Right ventricle myocardium inferior (tissue), 1 donor: ENCODE measurements at regions of chr9 and their contacts with region 1.

Region 1: DNA sequence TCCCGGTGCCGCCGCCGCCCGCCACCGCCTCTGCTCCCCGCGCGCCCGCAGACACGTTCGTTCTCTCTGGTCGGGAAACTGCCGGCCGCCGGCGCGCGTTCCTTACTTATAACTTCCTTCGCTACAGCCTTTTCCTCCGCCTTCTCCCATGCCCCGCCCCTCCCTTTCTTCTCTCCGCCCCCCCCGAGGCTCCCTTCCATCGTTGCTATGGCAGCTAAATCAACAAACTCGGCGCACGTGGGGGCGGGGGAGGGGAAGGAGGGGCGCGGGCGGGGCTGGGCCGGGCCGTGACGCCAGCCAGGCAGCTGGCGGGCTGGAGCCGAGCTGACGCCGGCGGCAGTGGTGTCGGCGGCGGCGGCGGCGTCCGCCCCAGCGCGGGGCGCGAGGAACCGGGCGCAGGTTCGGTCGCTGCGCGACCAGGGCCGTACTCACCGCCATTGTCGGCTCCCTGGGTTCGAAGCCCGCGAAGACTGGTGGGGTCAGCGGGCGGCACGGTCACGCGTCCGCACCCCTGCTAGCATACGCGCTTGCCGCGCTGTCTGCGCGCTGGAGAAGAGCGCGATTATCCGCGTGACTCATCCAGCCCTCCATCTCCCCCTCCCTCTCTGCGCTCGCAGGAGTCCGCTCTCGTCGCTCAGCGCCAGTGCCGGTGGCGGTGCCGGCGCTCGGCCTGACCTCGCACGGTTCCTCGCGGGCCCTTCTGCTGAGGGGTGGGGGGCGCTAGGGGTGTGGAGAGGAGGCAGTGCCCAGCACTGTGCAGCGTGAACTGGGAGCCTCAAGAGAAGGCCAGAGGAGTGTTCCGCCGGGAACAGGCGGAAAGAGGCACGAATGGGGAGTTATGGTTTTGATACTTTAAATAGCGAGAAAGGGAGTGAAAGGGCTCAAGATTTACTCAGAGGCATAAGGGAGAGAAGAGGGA is at the start of gene KLF4:
- DNase-seq: peak; percentile 96
- ATAC-seq: peak; percentile 88
- total RNA-seq, gene KLF4: 36.9 TPM

Region 2: DNA sequence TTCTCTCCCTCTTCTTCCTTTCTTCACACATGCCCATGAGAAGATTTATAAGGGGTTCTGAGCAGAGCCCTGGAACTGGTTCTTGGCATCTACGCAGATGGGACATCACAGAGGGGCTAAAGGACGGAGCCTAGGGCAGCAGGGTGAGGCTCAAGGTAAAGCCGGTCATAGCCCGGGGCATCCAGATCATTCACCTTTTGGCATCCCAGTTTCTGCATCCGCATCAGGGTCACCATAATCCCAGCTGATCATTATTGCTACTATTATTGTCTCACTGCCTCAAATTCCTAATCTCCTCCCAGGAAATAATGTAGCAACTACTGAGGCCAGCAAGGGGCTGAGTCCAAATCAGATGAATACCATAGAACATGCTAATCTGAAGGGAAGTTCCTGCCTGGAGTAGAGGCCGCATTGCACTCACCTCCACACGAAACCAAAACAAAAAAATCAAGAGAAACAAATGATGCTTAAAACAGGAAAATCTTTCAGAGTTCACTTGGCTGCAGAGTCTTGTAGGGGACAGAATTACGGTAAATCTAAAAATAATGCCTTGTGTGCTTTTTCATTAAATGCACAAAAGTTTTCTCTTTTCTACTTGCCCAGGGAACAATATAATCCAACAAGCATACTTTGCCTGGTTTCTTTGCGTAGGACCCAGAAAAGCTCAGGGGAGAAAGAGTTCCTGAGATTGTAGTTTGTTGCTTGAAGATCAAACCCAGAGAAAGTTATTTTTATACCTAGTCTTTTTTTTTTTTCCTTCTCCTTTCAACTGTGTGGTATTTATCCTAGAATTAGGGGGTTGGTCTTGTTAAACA is 87.2 kb after region 1 on chr9:
- intact Hi-C with region 1: loop called (anchors 10 kb)
- DNase-seq: no peak
- ATAC-seq: peak; percentile 44

Region 3: GRCh38 chr9:107637421-107638420 is 147.8 kb after region 1 on chr9:
- intact Hi-C with region 1: loop called (anchors 2 kb)
- DNase-seq: peak; percentile 94
- ATAC-seq: peak; percentile 94

Region 4: DNA sequence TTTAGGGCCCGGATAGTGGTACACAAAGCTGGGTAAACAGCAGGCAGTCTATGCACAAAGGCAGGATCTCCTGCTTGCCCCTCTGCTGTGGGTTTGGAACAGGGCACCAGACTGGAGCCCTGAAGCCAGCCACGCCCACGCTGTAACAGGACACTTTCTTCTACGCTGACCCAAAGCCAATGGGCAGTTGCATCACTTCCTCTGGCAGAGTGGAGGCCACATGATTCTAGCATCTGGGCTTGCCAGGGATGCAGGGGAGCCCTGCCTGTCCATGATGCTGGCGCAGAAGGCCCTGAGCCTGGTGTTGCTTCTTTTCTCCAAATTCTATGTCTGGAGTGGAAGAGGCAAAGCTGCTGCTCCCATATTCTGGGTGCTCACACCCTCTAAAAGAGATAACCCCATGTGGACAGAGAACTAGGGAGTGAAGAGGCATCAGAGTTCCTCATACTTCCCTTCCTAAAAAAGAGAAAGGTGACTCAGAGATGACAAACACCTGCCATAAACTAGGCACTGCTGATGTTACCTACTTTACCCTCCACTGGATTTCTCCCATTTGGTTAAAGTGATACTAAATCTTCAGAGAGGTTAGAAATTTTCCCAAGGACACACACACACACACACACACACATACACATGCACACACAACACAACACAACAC is 260.0 kb after region 1 on chr9:
- intact Hi-C with region 1: loop called (anchors 5 kb)
- DNase-seq: peak; percentile 92
- ATAC-seq: peak; percentile 94

Region 5: GRCh38 chr9:108053555-108054061 is 563.7 kb after region 1 on chr9:
- intact Hi-C with region 1: loop called (anchors 10 kb)
- DNase-seq: peak; percentile 79
- ATAC-seq: peak; percentile 81

Region 6: GRCh38 chr9:108142504-108143201 is 652.7 kb after region 1 on chr9:
- intact Hi-C with region 1: loop called (anchors 5 kb)
- DNase-seq: peak; percentile 89
- ATAC-seq: peak; percentile 99

Region 7: DNA sequence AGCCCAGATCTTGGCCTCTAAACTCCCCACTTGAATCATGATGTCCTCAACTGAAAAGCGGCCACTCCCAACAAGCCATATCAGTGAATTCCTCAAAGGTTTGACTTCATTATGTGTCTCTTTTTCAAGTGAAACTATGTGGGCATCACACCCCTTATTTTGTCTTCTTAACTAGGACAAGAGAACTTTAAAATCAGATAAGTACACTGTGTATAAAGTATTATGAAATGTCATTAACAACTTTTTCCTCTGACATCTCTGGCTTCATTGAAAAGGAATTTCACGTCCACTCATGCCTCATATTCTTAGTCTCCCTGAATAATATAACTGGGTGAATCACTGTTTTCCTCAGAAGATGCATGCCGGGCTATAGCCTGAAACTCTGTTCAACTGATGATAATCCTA is 950.0 kb after region 1 on chr9:
- intact Hi-C with region 1: loop called (anchors 10 kb)
- DNase-seq: no peak
- ATAC-seq: no peak